Aorta (tissue), 5 donors: ENCODE measurements at regions of chr17 and their contacts with region 1.

Region 1: DNA sequence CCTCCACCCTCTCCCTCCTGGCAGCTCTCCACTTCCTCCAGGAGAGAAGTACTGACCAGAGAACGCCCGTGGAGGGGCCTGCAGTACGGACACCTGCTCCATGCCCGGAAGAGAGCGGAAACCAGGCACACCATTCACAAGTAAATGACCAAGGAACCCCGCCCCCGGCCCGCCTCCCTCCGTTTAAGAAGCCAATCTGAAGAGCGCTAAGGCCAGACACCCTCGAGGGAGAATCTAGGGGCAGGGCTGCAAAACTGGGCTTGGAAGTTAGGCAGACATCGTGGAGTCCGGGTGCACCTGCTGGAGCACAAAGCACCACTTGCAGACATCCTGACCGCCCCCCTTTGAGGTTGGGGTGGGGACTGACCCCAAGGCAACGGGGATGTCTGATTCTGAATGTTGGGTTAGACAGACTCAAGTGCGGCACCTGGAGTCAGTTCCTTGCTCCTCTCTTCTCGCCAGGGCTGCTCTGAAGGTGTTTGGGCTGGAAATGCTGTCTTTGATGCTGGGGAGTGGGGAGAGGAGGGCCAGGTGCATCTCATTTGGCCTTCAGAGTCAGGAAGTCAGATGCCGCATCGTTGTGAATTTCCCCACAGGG is 964 bp upstream of the FAAP100 start:
- DNase-seq: peak; percentile 77 to 90
- ATAC-seq: peak; percentile 77
- H3K4me3 ChIP-seq: peak overlapping the region; percentile 39 to 66
- H3K27ac ChIP-seq: peak overlapping the region in 1 of 2 donors; percentile 79
- H3K4me1 ChIP-seq: no peaks in the 10 kb centered on the region
- H3K27me3 ChIP-seq: no peaks in the 10 kb centered on the region

Region 2: GRCh38 chr17:81083125-81083765 is 469.9 kb before region 1 on chr17:
- intact Hi-C with region 1: no loop called
- DNase-seq: no peak
- ATAC-seq: peak; percentile 28
- H3K4me3 ChIP-seq: no peak overlapping the region
- H3K27ac ChIP-seq: no peak overlapping the region
- H3K4me1 ChIP-seq: no peaks in the 10 kb centered on the region
- H3K27me3 ChIP-seq: no peaks in the 10 kb centered on the region

Region 3: DNA sequence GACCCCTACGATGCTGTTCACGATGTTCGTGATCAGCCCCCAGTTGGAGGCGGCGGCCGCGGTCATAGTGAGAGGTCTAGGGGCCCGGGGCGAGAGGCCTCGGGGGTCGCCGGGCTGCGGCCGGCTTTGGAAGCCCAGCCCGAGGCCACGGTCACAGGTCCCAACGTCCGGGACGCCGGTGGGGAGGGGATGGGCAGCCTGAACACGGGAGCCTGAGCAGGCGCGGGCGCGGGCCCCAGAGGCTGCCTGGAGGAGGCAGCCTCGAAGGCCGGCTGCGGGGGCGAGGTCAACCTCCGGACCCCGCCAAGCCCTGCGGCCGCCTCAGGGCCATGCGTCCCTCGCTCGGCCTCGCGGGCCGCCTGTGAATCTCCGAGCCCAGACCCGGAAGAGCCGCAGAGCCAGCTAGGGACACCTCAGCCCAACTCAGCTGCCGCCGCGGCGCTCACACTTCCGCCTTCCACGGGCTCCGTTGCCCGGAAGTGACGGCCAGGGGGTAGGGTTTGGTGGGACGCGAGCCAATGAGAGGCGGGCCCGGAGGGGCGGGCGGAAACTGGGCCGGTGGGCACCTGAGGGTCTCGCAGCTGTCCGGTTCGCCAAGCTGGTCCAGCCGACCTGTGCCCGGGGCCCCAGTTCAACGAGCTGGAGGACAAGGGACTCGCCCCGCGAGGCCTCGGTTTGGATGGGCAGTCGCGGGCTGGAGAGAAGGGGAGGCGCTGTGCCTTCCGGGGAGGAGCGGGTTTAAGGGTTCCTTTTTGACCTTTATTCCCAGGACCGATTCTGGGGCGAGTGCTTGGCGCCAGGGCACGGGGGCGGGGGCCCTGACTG is 258.0 kb before region 1 on chr17 and contains the start of gene SLC38A10:
- intact Hi-C with region 1: loop called in 1 of 2 experiments (anchors 5 kb)
- DNase-seq: peak; percentile 95 to 98
- ATAC-seq: peak; percentile 95
- H3K4me3 ChIP-seq: peak within 1 kb of the TSS; percentile 38 to 71
- H3K27ac ChIP-seq: peak within 1 kb of the TSS; percentile 1 to 59
- H3K4me1 ChIP-seq: no peaks in the 10 kb centered on the region
- H3K27me3 ChIP-seq: no peaks in the 10 kb centered on the region
- total RNA-seq, gene SLC38A10: 61.9 to 79.6 TPM

Region 4: GRCh38 chr17:81484195-81484979 is 68.7 kb before region 1 on chr17:
- intact Hi-C with region 1: no loop called
- DNase-seq: peak; percentile 93 to 96
- ATAC-seq: peak; percentile 89
- H3K4me3 ChIP-seq: no peak overlapping the region
- H3K27ac ChIP-seq: no peak overlapping the region
- H3K4me1 ChIP-seq: no peaks in the 10 kb centered on the region
- H3K27me3 ChIP-seq: peaks cover 0 to 2% of the 10 kb centered on the region in 2 donors

Region 5: DNA sequence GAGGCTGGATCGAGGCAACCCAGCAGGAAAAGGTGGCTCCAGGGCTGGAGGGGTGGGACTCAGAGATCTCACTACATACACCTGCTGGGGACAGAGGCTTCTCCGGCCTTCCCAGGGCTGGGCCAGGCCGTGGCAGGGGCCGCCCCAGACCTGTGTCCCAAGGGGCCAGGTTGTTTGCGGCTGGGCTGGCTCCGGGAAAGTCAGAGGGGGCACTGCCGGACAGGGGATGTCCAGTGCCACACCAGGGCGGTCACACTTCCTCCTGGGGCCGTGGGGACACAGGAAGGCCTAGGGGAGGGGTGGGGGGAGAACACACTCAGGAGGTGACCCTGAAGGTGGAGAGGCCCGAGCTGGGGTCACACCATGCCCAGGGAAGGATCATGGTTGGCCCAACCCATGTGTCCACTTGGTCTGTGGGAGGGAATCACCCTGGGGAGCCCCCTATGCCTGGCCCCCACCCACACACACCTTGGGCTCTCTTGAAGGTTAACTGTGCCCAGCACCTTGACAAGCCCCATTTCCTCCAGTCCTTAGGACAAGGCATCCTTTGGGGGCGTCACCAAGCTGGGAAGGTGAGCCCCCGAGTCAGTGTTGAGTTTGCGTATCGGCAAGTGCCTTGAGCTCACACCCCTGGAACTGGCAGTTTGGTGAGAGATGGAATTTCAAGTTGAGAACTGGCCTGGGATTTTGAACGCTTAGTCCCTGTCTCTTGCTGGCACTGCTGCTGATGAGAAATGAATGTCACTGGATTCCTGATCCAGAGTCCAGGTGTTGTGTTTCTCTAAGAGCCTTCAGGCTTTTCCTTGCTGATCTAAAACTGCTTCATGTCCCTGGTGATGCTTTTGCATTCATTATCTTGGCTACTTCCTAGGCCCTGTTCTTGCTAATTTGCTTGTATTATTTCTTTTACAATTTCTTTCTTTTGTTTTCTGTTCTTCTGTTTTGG is 32.9 kb before region 1 on chr17:
- intact Hi-C with region 1: loop called in 1 of 2 experiments (anchors 2 kb)
- DNase-seq: peak in 1 of 2 donors; percentile 76
- ATAC-seq: no peak
- H3K4me3 ChIP-seq: no peak overlapping the region
- H3K27ac ChIP-seq: no peak overlapping the region
- H3K4me1 ChIP-seq: peaks cover 0 to 1% of the 10 kb centered on the region in 2 donors
- H3K27me3 ChIP-seq: no peaks in the 10 kb centered on the region

Region 6: GRCh38 chr17:81566461-81567126 is 13.5 kb after region 1 on chr17:
- intact Hi-C with region 1: loop called (anchors 2 kb)
- DNase-seq: peak; percentile 86 to 88
- ATAC-seq: peak; percentile 85
- H3K4me3 ChIP-seq: peak overlapping the region in 1 of 2 donors; percentile 28
- H3K27ac ChIP-seq: peak overlapping the region; percentile 89 to 99
- H3K4me1 ChIP-seq: peaks cover 0 to 4% of the 10 kb centered on the region in 2 donors
- H3K27me3 ChIP-seq: no peaks in the 10 kb centered on the region

Region 7: GRCh38 chr17:81601525-81602120 is 48.5 kb after region 1 on chr17:
- intact Hi-C with region 1: loop called (anchors 2 to 5 kb)
- DNase-seq: peak in 1 of 2 donors; percentile 41
- ATAC-seq: peak; percentile 82
- H3K4me3 ChIP-seq: no peak overlapping the region
- H3K27ac ChIP-seq: no peak overlapping the region
- H3K4me1 ChIP-seq: no peaks in the 10 kb centered on the region
- H3K27me3 ChIP-seq: no peaks in the 10 kb centered on the region